Sigmoid colon (tissue), 7 donors: ENCODE measurements at regions of chr17 and their contacts with region 1.

Region 1: DNA sequence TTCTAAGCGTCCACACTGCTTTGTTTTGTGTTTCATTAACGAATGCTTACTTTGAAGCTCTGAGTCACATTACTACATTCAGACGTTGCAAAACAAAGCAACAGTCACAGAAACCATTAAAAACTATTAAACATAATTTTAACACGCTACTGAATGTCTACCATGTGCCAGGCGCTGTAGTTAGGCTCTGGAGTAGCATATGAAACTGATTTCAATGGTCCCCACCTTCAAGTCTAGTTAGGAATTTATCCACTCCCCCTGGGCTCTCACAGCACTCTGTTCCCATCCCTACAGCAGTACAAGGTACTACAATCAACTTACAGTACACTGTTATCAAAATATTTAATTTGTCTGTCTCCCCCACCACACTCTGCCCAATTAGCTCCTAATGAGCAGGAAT is 631 bp downstream of the UTP6 start:
- DNase-seq: no peak
- H3K4me3 ChIP-seq: peak overlapping the region; percentile 67 to 76 (median 70)
- H3K27ac ChIP-seq: peak overlapping the region; percentile 65 to 80 (median 79)
- H3K4me1 ChIP-seq: peaks cover 0 to 21% (median 12%) of the 10 kb centered on the region in 4 donors
- H3K27me3 ChIP-seq: no peaks in the 10 kb centered on the region
- CTCF ChIP-seq: no peak
- EP300 ChIP-seq: no peak
- POLR2A ChIP-seq: no peak

Region 2: GRCh38 chr17:31858642-31859473 is 42.0 kb before region 1 on chr17 and contains the start of gene COPRS:
- intact Hi-C with region 1: loop called (anchors 5 kb)
- DNase-seq: peak; percentile 96
- H3K4me3 ChIP-seq: peak within 1 kb of the TSS; percentile 65 to 89 (median 77)
- H3K27ac ChIP-seq: peak within 1 kb of the TSS; percentile 84 to 92 (median 89)
- H3K4me1 ChIP-seq: peaks cover 0 to 38% (median 35%) of the 10 kb centered on the region in 4 donors
- H3K27me3 ChIP-seq: no peaks in the 10 kb centered on the region
- CTCF ChIP-seq: no peak
- EP300 ChIP-seq: no peak
- POLR2A ChIP-seq: no peak
- total RNA-seq, gene COPRS: 135 to 216 (median 170) TPM

Region 3: GRCh38 chr17:31931756-31932155 is 30.9 kb after region 1 on chr17:
- intact Hi-C with region 1: loop called (anchors 1 kb)
- DNase-seq: no peak
- H3K4me3 ChIP-seq: no peak overlapping the region
- H3K27ac ChIP-seq: no peak overlapping the region
- H3K4me1 ChIP-seq: peaks cover 0 to 5% (median 0%) of the 10 kb centered on the region in 4 donors
- H3K27me3 ChIP-seq: no peaks in the 10 kb centered on the region
- CTCF ChIP-seq: no peak
- EP300 ChIP-seq: no peak
- POLR2A ChIP-seq: no peak